H1 (cell line): ENCODE measurements at regions of chr17 and their contacts with region 1.

Region 1: DNA sequence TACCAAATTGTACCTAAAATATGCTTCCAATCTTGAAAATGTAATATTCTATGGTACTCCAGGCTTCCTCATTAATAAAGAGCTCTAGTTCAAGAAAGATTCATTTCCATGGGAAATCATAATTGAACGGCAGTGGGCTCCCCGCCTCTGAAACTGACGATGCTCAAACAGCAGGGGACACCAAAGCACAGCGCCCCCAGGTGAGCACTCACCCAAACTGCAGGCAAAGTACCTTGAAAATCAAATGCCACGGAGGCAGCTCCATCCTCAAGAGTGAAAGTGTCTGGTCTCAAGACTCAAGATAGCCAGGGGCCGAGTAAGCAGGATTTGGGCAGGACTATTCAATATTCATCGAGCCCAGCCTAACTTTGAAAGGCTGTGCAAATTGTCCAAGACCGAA is 217.4 kb upstream of the TNRC6C start:
- DNase-seq: peak; percentile 23 to 87
- H3K4me3 ChIP-seq: no peak overlapping the region
- H3K27ac ChIP-seq: no peak overlapping the region
- H3K4me1 ChIP-seq: peaks cover 0 to 10% (median 5%) of the 10 kb centered on the region in 4 experiments; a peak in 5 of 7 replicates
- H3K27me3 ChIP-seq: peaks cover 0 to 23% (median 15%) of the 10 kb centered on the region in 4 experiments; a peak in 4 of 7 replicates
- CTCF ChIP-seq: peak; percentile 72 to 80 (median 76)
- EP300 ChIP-seq: no peak
- POLR2A ChIP-seq: no peak
- RAD21 ChIP-seq: peak; percentile 42 to 66

Region 2: GRCh38 chr17:77708936-77709335 is 32.2 kb before region 1 on chr17:
- CTCF ChIA-PET with region 1: interaction called, 10 read pairs
- POLR2A ChIA-PET with region 1: no interaction called
- DNase-seq: no peak
- H3K4me3 ChIP-seq: no peak overlapping the region
- H3K27ac ChIP-seq: no peak overlapping the region
- H3K4me1 ChIP-seq: peaks cover 0 to 9% (median 4%) of the 10 kb centered on the region in 4 experiments; a peak in 6 of 7 replicates
- H3K27me3 ChIP-seq: peaks cover 0 to 2% (median 0%) of the 10 kb centered on the region in 4 experiments; a peak in 4 of 7 replicates
- CTCF ChIP-seq: no peak
- EP300 ChIP-seq: no peak
- POLR2A ChIP-seq: no peak
- RAD21 ChIP-seq: no peak

Region 3: GRCh38 chr17:77724876-77725615 is 16.1 kb before region 1 on chr17:
- CTCF ChIA-PET with region 1: interaction called, 16 read pairs
- POLR2A ChIA-PET with region 1: interaction called, 6 read pairs
- DNase-seq: peak in 1 of 2 experiments; percentile 32
- H3K4me3 ChIP-seq: no peak overlapping the region
- H3K27ac ChIP-seq: no peak overlapping the region
- H3K4me1 ChIP-seq: peaks cover 0 to 6% (median 2%) of the 10 kb centered on the region in 4 experiments; a peak in 6 of 7 replicates
- H3K27me3 ChIP-seq: peaks cover 0 to 2% (median 0%) of the 10 kb centered on the region in 4 experiments; a peak in 2 of 7 replicates
- CTCF ChIP-seq: no peak
- EP300 ChIP-seq: no peak
- POLR2A ChIP-seq: no peak
- RAD21 ChIP-seq: no peak